ENCODE measurements at regions of chr17 and their contacts with region 1.

Region 1: DNA sequence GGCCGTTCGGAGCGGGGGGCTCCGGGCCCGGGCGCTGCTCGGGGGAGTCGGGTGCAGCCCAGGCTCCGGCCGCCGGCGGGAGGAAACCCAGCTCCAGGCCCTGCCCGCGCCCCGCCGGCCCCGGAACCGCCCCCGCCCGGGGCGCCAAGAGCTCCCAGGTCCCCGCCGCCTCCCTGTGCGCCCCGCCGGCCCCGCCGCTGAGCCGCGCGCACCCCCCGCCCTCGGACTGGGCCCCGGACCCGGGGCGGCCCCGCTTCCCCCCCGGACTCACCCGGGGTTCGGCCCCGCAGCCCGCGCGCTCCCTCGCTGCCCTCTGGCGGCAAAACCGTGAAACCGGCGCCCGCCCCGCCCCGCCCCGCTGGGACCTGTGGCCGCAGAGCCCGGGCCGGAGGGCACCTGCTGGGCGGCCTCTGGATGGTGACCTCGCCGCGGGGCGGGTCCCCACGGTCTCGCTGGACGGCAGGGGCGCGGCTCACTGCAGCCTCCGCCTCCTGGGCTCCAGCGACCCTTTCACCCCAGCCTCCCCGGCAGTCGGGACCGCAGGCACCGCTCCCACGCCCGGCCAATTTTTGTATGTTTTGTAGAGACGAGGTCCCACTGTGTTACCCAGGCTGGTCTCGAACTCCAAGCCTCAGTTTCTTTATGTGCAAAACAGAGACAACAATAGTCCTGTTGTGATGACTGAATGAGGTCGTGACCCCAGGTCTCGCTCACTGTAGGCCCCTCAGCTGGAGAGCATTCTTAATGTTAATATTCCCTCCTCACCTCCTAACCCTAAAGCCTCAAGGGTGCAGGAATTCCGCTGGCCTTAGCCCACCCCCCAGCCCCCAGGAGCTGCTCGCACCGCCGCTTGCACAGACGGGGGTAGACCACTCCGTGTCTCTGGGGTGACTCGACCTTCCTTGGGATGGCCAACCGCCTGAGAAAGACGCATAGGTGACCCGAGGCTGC is 33.6 kb upstream of the RPH3AL start:
- DNase-seq: peak; percentile 83
- H3K4me3 ChIP-seq: peak overlapping the region; percentile 33 to 66 (median 58)
- H3K27ac ChIP-seq: peak overlapping the region; percentile 60 to 69 (median 67)
- H3K4me1 ChIP-seq: peaks cover 0 to 16% (median 12%) of the 10 kb centered on the region in 4 donors
- H3K27me3 ChIP-seq: peaks cover 0 to 37% (median 27%) of the 10 kb centered on the region in 3 donors
- CTCF ChIP-seq: peak in 3 of 4 experiments; percentile 6 to 67 (median 13)
- EP300 ChIP-seq: no peak
- POLR2A ChIP-seq: no peak

Region 2: DNA sequence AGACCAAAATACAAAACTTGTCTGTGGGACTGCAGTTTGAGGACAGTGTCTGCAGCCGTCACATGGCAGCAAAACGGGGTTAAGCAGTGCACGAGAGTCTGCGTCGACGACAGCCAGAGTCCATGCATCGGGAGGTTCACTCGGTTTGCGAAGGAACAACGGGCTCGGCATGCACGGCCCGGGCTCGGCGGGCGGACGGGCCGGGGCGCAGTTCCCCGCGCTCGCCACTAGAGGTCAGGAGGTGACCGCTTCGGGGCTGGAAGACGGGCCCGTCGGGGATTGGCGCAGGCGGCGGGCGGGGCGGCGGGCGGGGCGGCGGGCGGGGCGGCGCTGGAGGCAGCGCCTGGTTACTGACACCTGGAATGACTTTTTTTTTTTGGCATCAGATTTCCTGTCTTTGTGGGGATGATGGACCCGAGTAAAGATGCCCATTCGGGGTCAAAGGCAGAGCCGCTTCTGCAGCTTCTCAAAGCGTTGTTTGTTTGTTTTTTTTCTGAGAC is 242.4 kb before region 1 on chr17:
- intact Hi-C with region 1: loop called (anchors 1 kb)
- DNase-seq: peak; percentile 90
- H3K4me3 ChIP-seq: no peak overlapping the region
- H3K27ac ChIP-seq: no peak overlapping the region
- H3K4me1 ChIP-seq: peaks cover 0 to 4% (median 2%) of the 10 kb centered on the region in 4 donors
- H3K27me3 ChIP-seq: no peaks in the 10 kb centered on the region
- CTCF ChIP-seq: peak; percentile 69 to 85 (median 74)
- EP300 ChIP-seq: no peak
- POLR2A ChIP-seq: no peak

Region 3: GRCh38 chr17:180392-181214 is 205.6 kb before region 1 on chr17:
- intact Hi-C with region 1: no loop called
- DNase-seq: no peak
- H3K4me3 ChIP-seq: peak overlapping the region in 3 of 4 donors; percentile 32 to 49 (median 45)
- H3K27ac ChIP-seq: peak overlapping the region; percentile 47 to 64 (median 56)
- H3K4me1 ChIP-seq: peaks cover 0 to 21% (median 17%) of the 10 kb centered on the region in 4 donors
- H3K27me3 ChIP-seq: peaks cover 14 to 68% (median 39%) of the 10 kb centered on the region in 3 donors
- CTCF ChIP-seq: no peak
- EP300 ChIP-seq: no peak
- POLR2A ChIP-seq: no peak

Region 4: GRCh38 chr17:301681-302298 is 84.4 kb before region 1 on chr17:
- intact Hi-C with region 1: no loop called
- DNase-seq: peak; percentile 62
- H3K4me3 ChIP-seq: no peak overlapping the region
- H3K27ac ChIP-seq: peak overlapping the region; percentile 51 to 69 (median 63)
- H3K4me1 ChIP-seq: peaks cover 0 to 35% (median 25%) of the 10 kb centered on the region in 4 donors
- H3K27me3 ChIP-seq: no peaks in the 10 kb centered on the region
- CTCF ChIP-seq: no peak
- EP300 ChIP-seq: no peak
- POLR2A ChIP-seq: no peak